Head of caudate nucleus (tissue), 42 donors: ENCODE measurements at regions of chr11 and their contacts with region 1.

Region 1: GRCh38 chr11:34926101-34926830 is 9.8 kb downstream of the PDHX start:
- DNase-seq: peak in 7 of 42 donors; percentile 7 to 58 (median 33)

Region 2: GRCh38 chr11:34732831-34733230 is 193.4 kb before region 1 on chr11:
- intact Hi-C with region 1: no loop called
- DNase-seq: peak in 13 of 42 donors; percentile 8 to 66 (median 22)

Region 3: DNA sequence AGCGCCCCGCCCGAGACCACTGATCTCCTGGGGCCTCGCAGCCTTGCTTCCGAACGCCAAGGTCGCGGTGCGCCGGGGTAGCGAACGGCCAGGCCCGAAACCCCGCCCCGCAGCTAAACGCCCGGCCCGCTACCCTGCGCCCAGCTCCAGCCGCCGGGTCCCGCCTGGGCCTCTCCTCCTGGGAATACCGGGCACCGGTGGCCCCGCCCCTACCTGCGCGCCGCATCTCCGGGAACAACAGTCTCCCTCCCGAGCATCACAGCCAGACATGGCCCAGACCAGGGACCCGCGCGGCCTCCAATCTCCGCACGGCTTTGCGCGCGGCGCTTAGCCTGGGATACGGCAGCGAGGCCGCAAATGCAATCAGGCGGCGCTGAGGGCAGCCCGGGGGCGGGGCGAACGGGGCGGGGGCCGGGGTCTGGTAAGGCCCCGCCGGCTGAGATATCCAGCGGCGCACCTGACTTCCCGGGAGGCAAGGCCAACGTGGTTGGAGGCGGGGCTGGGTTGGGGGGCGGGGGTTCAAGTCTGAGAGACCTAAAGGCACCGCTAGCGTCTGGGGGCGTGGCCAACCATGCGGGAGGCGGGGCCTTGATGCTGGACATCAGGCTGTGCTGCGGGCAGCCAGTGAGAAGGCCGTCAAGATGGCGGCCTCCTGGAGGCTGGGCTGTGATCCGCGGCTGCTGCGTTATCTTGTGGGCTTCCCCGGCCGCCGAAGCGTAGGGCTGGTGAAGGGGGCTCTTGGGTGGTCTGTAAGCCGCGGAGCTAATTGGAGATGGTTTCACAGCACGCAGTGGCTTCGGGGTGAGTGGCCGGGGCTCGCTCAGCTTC is 10.0 kb before region 1 on chr11 and contains the starts of genes APIP and PDHX:
- intact Hi-C with region 1: no loop called
- DNase-seq: peak; percentile 92 to 99 (median 97)

Region 4: GRCh38 chr11:35006389-35007128 is 80.3 kb after region 1 on chr11:
- intact Hi-C with region 1: no loop called
- DNase-seq: no peak

Region 5: DNA sequence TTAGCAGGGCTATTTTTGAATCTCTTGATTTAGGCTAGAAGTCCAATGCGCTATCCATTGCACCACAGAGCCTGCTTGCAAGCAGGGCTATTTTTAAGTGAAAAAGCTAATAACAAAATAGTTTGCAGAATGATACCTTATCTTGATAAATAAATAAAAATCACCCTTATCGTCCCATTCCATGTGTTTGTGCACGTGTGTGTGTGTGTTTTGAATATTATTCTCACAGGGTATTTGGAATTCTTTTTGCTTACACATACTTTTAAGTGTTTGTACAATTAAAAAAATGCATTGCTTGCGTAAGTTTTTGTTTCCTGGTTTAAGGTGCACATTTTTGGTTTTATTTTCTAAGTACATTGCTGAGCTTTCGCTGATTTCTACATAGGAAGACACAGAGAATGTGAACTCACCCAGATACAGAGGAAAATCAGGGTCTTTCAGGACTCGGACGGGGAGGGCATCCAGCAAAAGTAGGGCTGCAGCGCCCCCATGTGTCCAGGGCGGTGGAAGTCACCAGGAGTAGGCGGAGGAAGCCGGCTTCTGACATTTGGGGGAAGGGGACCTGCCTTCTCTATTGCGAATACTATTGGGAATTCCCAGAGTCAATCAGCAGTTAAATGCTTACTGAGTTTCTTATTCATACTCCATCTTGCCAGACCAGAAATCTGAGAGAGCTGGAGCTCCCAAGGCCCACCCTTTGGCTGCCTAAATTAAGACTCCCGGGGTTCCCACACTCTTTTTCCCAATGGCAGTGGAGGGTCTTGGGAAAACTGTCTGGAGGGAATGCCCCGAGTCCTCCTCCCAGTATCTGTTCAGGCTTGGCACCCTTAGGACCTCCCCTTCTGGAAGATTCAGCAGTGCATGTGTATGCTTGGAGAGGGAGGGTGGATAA is 465.9 kb after region 1 on chr11:
- intact Hi-C with region 1: loop called (anchors 5 kb)
- DNase-seq: peak; percentile 69 to 92 (median 84)

Region 6: GRCh38 chr11:35485656-35486322 is 559.5 kb after region 1 on chr11:
- intact Hi-C with region 1: loop called (anchors 10 kb)
- DNase-seq: peak; percentile 67 to 94 (median 87)